ENCODE measurements at regions of chr11 and their contacts with region 1.

Region 1: GRCh38 chr11:3879967-3880542 is 24.6 kb downstream of the STIM1 start:
- DNase-seq: no peak
- ATAC-seq: peak; percentile 20 to 54 (median 34)
- H3K4me3 ChIP-seq: no peak overlapping the region
- H3K27ac ChIP-seq: peak overlapping the region in 9 of 12 donors; percentile 9 to 53 (median 19)
- H3K4me1 ChIP-seq: peaks cover 0 to 48% (median 21%) of the 10 kb centered on the region in 12 donors
- H3K27me3 ChIP-seq: no peaks in the 10 kb centered on the region
- CTCF ChIP-seq: no peak
- POLR2A ChIP-seq: no peak

Region 2: GRCh38 chr11:3824714-3825472 is 55.2 kb before region 1 on chr11:
- intact Hi-C with region 1: loop called in 1 of 10 experiments (anchors 5 kb)
- DNase-seq: peak; percentile 41 to 81 (median 65)
- ATAC-seq: peak in 3 of 4 donors; percentile 56 to 66 (median 59)
- H3K4me3 ChIP-seq: no peak overlapping the region
- H3K27ac ChIP-seq: peak overlapping the region in 1 of 12 donors; percentile 37
- H3K4me1 ChIP-seq: peaks cover 0 to 31% (median 0%) of the 10 kb centered on the region in 12 donors
- H3K27me3 ChIP-seq: no peaks in the 10 kb centered on the region
- CTCF ChIP-seq: peak; percentile 36 to 78 (median 52)
- POLR2A ChIP-seq: no peak